IMR-90 (cell line): ENCODE measurements at regions of chr19 and their contacts with region 1.

Region 1: DNA sequence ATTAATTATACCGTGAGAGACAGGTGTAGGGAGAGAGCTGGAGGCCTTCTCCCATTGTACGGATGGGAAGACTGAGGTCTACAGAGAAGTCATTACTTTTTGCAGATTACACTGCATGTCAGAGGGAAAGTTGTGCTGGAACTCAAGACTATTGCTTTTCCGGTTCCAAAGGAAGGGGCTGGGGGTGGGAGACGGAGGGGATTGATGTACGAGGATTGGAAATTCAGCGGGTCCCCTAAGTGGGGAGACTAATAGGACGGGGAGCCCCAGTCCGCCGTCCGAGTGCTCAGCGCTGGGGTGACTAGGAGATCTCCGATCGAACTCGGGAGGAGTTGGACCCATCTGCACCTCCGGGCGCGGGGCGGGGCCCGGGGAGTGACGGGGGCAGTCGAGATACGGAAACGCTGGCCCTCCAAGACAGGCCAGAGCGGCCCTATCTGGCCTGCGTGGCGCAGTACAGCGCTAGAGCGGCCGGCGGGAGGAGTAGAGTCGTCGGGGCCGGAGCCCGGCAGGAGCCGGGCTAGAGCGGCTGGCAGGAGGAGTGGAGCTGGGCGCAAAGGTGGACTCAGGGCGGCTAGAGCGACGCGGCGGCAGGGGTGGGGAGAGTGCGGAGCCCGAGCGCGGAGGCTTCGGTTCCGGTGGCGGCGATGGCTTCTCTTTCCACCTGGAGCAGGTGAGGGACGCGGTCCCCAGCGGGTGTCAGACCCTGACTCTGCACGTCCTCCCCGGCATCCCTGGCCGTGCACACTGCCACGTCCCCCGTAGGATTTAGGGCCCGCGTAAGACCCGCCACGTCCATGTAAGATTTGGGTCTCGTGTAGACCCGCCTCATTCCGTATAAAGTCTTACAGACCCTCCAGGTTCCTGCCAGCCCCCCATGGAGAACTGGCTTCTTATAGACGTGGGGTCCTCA is 1.1 kb downstream of the ARHGEF1 start:
- DNase-seq: peak; percentile 96
- ATAC-seq: peak; percentile 97
- H3K4me3 ChIP-seq: peak overlapping the region; percentile 95
- H3K27ac ChIP-seq: peak overlapping the region; percentile 67
- H3K4me1 ChIP-seq: peaks cover 8% of the 10 kb centered on the region
- H3K27me3 ChIP-seq: no peaks in the 10 kb centered on the region
- CTCF ChIP-seq: peak; percentile 23; the same call in 1 of the 2 replicates
- POLR2A ChIP-seq: peak; percentile 77
- RAD21 ChIP-seq: no peak

Region 2: GRCh38 chr19:41616792-41617621 is 267.1 kb before region 1 on chr19:
- CTCF ChIA-PET with region 1: no interaction called
- POLR2A ChIA-PET with region 1: no interaction called
- dilution Hi-C with region 1: no loop called
- in situ Hi-C with region 1: no loop called
- intact Hi-C with region 1: no loop called
- DNase-seq: peak; percentile 10
- ATAC-seq: peak; percentile 49; the same call in 1 of the 2 replicates
- H3K4me3 ChIP-seq: no peak overlapping the region
- H3K27ac ChIP-seq: no peak overlapping the region
- H3K4me1 ChIP-seq: no peaks in the 10 kb centered on the region
- H3K27me3 ChIP-seq: no peaks in the 10 kb centered on the region
- CTCF ChIP-seq: no peak
- POLR2A ChIP-seq: no peak
- RAD21 ChIP-seq: no peak

Region 3: DNA sequence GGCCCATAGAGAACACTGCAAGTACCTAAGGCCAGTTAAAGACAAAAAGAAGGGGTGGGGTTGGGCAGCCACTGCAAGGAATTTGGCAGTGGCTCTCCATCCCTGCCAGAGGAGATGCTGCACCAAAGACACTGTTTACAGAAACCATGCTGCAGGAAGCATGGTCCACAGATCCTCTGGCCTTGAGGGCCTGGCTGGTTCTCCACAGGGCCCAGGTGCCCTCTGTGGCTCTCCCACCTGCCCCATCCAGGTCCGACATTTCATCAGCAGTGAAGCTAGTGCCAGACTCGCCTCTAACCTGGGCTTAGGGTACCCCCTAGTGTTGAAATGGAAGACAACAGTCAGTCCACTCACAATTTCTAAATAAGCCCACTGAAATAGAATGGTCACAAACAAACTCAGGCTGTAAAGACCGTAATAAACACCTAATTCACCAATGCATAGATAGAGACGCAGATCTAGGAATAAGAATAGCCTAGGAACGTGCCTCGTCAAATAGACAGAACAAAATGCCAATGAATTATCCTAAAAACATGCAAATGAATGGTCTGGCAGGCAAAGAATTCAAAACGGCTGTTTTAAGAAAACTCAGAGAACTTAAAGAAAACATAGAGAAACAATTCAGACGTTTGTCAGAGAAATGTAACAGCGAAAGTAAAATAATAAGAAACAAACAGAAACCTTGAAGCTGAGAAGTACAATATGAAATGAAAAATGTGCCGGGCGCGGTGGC is 62.9 kb before region 1 on chr19:
- CTCF ChIA-PET with region 1: no interaction called
- POLR2A ChIA-PET with region 1: no interaction called
- dilution Hi-C with region 1: no loop called
- in situ Hi-C with region 1: no loop called
- intact Hi-C with region 1: no loop called
- DNase-seq: peak; percentile 15
- ATAC-seq: peak; percentile 51; the same call in 1 of the 2 replicates
- H3K4me3 ChIP-seq: no peak overlapping the region
- H3K27ac ChIP-seq: no peak overlapping the region
- H3K4me1 ChIP-seq: no peaks in the 10 kb centered on the region
- H3K27me3 ChIP-seq: no peaks in the 10 kb centered on the region; the same call in 1 of the 2 replicates
- CTCF ChIP-seq: peak; percentile 48
- POLR2A ChIP-seq: no peak
- RAD21 ChIP-seq: peak; percentile 48

Region 4: DNA sequence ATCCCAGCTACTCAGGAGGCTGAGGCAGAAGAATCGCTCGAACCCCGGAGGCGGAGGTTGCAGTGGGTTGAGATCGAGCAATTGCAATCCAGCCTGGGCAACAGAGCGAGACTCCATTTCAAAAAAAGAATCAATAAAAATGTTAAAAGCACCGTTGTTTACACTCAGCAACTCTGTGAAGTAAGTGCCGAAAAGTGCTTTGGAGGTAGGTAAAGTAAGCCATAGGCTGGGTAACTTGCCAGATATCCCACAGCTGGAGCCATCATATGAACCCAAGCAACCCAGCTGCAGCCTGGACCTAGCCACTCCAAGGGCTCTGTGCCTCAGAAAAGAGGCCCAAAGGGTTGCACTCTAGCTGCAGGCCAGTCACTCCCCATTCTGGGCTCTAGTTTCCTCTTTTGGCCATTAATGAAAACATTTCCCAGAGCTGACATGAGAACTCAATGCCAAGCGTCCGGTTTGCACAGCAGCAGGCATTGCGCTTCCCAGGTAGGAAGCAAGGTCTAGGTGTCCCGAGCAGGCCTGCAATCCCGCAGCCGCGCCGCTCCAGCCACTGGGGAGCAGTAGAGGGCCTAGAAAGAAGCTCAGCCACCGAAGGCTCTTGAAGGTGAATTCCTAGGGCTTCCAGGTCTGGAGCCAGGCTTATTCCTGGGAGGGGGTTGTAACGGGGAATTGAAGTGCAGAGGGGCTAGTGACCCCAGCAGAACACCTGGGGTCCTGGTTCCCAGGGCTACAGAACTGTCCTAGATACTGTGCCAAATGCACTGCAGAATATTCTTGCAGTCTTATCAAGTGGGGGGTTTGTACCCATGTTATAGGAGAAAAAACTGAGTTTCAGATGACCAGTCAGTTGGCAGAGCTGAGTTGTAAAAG is 11.1 kb before region 1 on chr19:
- CTCF ChIA-PET with region 1: no interaction called
- POLR2A ChIA-PET with region 1: no interaction called
- dilution Hi-C with region 1: no loop called
- in situ Hi-C with region 1: no loop called
- intact Hi-C with region 1: no loop called
- DNase-seq: peak; percentile 59
- ATAC-seq: peak; percentile 62
- H3K4me3 ChIP-seq: no peak overlapping the region
- H3K27ac ChIP-seq: no peak overlapping the region
- H3K4me1 ChIP-seq: peaks cover 1% of the 10 kb centered on the region; the same call in 1 of the 2 replicates
- H3K27me3 ChIP-seq: peaks cover 9% of the 10 kb centered on the region; the same call in 1 of the 2 replicates
- CTCF ChIP-seq: peak; percentile 55
- POLR2A ChIP-seq: peak; percentile 48; the same call in 1 of the 2 replicates
- RAD21 ChIP-seq: peak; percentile 60

Region 5: GRCh38 chr19:41934849-41935374 is 50.8 kb after region 1 on chr19:
- CTCF ChIA-PET with region 1: no interaction called
- POLR2A ChIA-PET with region 1: no interaction called
- dilution Hi-C with region 1: no loop called
- in situ Hi-C with region 1: no loop called
- intact Hi-C with region 1: loop called (anchors 5 kb)
- DNase-seq: peak; percentile 49
- ATAC-seq: peak; percentile 69
- H3K4me3 ChIP-seq: no peak overlapping the region
- H3K27ac ChIP-seq: no peak overlapping the region
- H3K4me1 ChIP-seq: peaks cover 12% of the 10 kb centered on the region
- H3K27me3 ChIP-seq: peaks cover 56% of the 10 kb centered on the region
- CTCF ChIP-seq: peak; percentile 84
- POLR2A ChIP-seq: no peak
- RAD21 ChIP-seq: peak; percentile 65

Region 6: GRCh38 chr19:41945135-41945766 is 61.2 kb after region 1 on chr19:
- CTCF ChIA-PET with region 1: no interaction called
- POLR2A ChIA-PET with region 1: no interaction called
- dilution Hi-C with region 1: no loop called
- in situ Hi-C with region 1: loop called (anchors 5 kb)
- intact Hi-C with region 1: no loop called
- DNase-seq: no peak
- ATAC-seq: no peak
- H3K4me3 ChIP-seq: no peak overlapping the region
- H3K27ac ChIP-seq: no peak overlapping the region
- H3K4me1 ChIP-seq: no peaks in the 10 kb centered on the region
- H3K27me3 ChIP-seq: peaks cover 8% of the 10 kb centered on the region
- CTCF ChIP-seq: no peak
- POLR2A ChIP-seq: no peak
- RAD21 ChIP-seq: no peak

Region 7: GRCh38 chr19:42032431-42032830 is 148.4 kb after region 1 on chr19:
- CTCF ChIA-PET with region 1: no interaction called
- POLR2A ChIA-PET with region 1: no interaction called
- dilution Hi-C with region 1: no loop called
- in situ Hi-C with region 1: no loop called
- intact Hi-C with region 1: loop called (anchors 10 kb)
- DNase-seq: no peak
- ATAC-seq: no peak
- H3K4me3 ChIP-seq: no peak overlapping the region
- H3K27ac ChIP-seq: no peak overlapping the region
- H3K4me1 ChIP-seq: no peaks in the 10 kb centered on the region
- H3K27me3 ChIP-seq: peaks cover 22% of the 10 kb centered on the region
- CTCF ChIP-seq: no peak
- POLR2A ChIP-seq: no peak
- RAD21 ChIP-seq: no peak